IMR-90 (cell line): ENCODE measurements at regions of chr2 and their contacts with region 1.

Region 1: GRCh38 chr2:180240774-180241173 is 233.7 kb upstream of the CWC22 start:
- DNase-seq: peak; percentile 22
- ATAC-seq: peak; percentile 54
- H3K4me3 ChIP-seq: no peak overlapping the region
- H3K27ac ChIP-seq: no peak overlapping the region
- H3K4me1 ChIP-seq: no peaks in the 10 kb centered on the region
- H3K27me3 ChIP-seq: no peaks in the 10 kb centered on the region
- CTCF ChIP-seq: peak; percentile 48
- POLR2A ChIP-seq: no peak
- RAD21 ChIP-seq: peak; percentile 55

Region 2: GRCh38 chr2:181070119-181070835 is 829.5 kb after region 1 on chr2:
- CTCF ChIA-PET with region 1: no interaction called
- POLR2A ChIA-PET with region 1: interaction called, 3 read pairs
- dilution Hi-C with region 1: no loop called
- in situ Hi-C with region 1: no loop called
- intact Hi-C with region 1: loop called (anchors 5 kb)
- DNase-seq: peak; percentile 76
- ATAC-seq: peak; percentile 55
- H3K4me3 ChIP-seq: no peak overlapping the region
- H3K27ac ChIP-seq: no peak overlapping the region
- H3K4me1 ChIP-seq: peaks cover 3% of the 10 kb centered on the region
- H3K27me3 ChIP-seq: no peaks in the 10 kb centered on the region
- CTCF ChIP-seq: no peak
- POLR2A ChIP-seq: no peak
- RAD21 ChIP-seq: no peak